Adrenal gland (tissue), 19 donors: ENCODE measurements at regions of chr1 and their contacts with region 1.

Region 1: DNA sequence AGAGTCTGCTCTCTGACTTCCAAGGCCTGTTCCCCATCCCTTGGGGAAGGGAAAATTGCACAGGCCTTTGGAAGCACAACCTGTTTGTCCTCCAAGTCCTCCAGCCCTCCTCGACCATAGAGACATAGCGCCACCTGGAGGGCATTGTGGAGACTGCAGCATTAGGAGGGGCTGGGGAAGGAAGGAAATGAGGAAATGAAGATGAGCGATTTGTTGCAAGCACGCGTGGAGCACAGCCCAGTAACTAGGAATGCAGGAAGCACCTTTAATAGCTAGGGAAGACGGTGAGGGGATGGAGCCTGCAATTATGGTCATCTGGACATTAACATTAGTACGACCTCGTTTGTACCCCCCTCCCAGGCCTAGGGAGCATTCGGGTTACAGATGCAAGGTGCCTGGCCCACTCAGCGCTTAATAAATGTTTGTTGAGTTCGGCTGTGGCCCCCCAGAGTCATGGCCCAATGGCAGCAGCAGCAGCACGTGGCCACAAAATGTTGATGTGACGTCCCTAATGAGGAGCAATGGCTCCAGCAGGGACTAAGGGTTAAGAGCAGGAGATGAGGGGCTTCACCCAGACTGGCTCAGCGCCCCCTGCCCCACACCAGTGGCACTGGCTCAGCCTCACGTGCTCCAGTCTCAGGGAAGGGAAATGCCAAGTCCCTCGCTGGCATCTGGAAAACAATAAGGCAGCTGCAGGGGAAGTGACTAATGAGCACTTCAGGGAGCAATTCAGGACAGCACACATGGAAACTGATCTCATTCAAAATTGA is 8.0 kb upstream of the CAMK2N1 start:
- DNase-seq: peak; percentile 75 to 95 (median 84)
- H3K4me3 ChIP-seq: no peak overlapping the region
- H3K27ac ChIP-seq: peak overlapping the region in 1 of 5 donors; percentile 31
- H3K4me1 ChIP-seq: peaks cover 0 to 12% of the 10 kb centered on the region in 2 donors
- H3K27me3 ChIP-seq: no peaks in the 10 kb centered on the region
- CTCF ChIP-seq: peak; percentile 96 to 99 (median 99)
- POLR2A ChIP-seq: no peak

Region 2: GRCh38 chr1:19918057-19918456 is 576.0 kb before region 1 on chr1:
- intact Hi-C with region 1: loop called in 1 of 2 experiments (anchors 10 kb)
- DNase-seq: peak; percentile 75 to 93 (median 86)
- H3K4me3 ChIP-seq: no peak overlapping the region
- H3K27ac ChIP-seq: no peak overlapping the region
- H3K4me1 ChIP-seq: no peaks in the 10 kb centered on the region
- H3K27me3 ChIP-seq: no peaks in the 10 kb centered on the region
- CTCF ChIP-seq: peak; percentile 86 to 94 (median 88)
- POLR2A ChIP-seq: no peak

Region 3: DNA sequence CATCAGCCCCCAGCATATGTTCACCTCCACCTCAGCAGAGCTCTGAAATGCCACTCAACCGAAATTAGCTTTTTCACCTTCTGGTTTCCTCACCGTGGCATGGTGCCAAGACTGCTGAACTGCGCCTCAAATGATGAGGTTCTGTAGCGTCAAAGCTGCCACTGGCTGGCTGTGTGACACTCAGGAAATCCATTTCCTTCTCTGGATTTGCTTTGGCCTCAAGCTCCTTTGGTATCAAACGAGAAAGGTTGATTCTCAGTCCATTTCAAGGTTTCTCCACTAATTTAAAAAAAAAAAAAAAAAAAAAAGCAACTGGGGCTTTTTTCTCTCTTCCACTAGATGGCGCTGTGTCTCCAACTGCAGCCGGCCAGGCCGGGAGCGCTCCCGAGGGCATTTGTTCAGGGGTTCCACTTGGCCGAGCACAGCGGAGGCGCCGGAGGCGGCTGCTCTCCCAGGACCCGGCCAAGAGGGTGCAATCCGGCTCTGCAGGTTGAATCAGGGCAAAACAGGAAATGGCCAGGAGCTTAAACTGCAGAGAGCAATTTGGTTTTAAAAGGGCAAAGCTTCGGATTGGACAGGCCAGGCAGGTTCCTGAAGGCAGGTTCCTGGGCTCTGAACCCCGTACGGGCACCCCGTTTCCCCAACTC is 281.2 kb before region 1 on chr1:
- intact Hi-C with region 1: loop called (anchors 5 kb)
- DNase-seq: peak; percentile 59 to 81 (median 74)
- H3K4me3 ChIP-seq: no peak overlapping the region
- H3K27ac ChIP-seq: peak overlapping the region in 3 of 5 donors; percentile 83 to 93 (median 87)
- H3K4me1 ChIP-seq: peaks cover 17 to 28% of the 10 kb centered on the region in 2 donors
- H3K27me3 ChIP-seq: no peaks in the 10 kb centered on the region
- CTCF ChIP-seq: peak; percentile 57 to 87 (median 72)
- POLR2A ChIP-seq: no peak

Region 4: DNA sequence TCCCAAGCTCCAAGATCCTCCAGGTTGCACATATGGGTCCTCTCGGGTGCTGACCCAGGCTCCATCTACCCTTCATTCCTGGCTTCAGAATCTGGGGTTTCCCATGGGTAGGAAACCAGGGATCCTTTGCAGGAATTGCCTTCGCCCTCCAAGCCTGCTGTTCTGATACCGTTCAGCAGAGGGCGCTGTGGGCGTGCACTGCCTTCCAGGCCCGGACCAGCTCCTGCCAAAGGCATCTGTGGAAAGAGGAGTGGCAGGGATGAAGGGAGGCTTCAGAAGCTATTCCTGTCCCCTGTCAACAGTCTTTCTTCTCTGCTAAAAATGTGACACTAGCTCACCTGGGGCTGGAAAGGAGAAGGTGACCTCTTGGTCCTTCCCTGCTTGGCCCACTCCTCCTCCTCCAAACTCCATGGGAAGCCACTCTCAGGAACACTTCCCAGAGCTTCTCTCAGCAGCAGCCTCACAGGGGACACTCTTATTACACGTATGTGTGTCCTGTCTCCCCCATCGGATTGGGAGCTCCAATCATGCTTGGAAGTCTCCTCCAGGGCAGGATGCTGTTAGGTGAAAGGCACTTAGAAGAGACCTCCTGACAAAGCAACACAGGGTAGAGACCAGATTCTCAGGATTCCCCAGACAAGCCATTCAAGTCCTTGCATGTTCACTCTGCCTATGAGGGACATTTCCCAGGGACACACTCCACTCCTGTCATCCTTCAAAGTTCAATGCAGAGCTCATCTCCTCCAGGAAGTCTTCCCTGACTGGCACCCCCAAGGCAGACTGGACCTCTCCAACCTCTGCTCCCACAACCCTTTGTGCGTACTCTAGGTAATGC is 132.0 kb before region 1 on chr1:
- intact Hi-C with region 1: loop called (anchors 5 kb)
- DNase-seq: peak; percentile 54 to 91 (median 75)
- H3K4me3 ChIP-seq: no peak overlapping the region
- H3K27ac ChIP-seq: no peak overlapping the region
- H3K4me1 ChIP-seq: peaks cover 7 to 24% of the 10 kb centered on the region in 2 donors
- H3K27me3 ChIP-seq: peaks cover 22% of the 10 kb centered on the region
- CTCF ChIP-seq: peak; percentile 58 to 89 (median 75)
- POLR2A ChIP-seq: no peak

Region 5: DNA sequence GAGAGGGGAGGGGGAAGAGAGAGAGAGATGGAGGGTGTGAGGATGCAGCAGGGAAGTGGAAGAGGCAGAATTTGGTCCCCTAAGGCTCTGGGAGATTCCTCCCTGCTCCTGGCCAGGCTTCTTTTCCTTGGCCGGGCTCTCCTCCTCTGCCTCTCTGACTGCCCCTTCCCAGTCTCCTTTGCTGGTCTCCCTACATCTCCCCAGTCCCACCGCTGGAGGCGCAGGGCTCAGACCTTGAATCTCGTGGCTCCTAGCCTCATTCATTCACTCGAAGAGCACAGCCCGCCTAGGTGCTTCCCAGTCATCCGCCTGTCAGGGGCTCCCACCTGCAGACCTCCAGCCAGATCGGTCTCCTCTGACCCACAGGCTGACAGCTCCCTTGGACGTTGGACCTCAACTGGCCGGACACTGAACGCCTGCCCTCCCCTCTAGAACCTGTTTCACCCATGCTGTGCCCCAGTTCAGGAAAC is 126.9 kb before region 1 on chr1:
- intact Hi-C with region 1: loop called (anchors 5 kb)
- DNase-seq: peak in 6 of 7 donors; percentile 46 to 73 (median 58)
- H3K4me3 ChIP-seq: peak overlapping the region in 1 of 4 donors; percentile 49
- H3K27ac ChIP-seq: peak overlapping the region in 1 of 5 donors; percentile 34
- H3K4me1 ChIP-seq: peaks cover 0 to 13% of the 10 kb centered on the region in 2 donors
- H3K27me3 ChIP-seq: peaks cover 22% of the 10 kb centered on the region
- CTCF ChIP-seq: peak; percentile 24 to 56 (median 48)
- POLR2A ChIP-seq: no peak

Region 6: GRCh38 chr1:20411196-20411980 is 82.6 kb before region 1 on chr1:
- intact Hi-C with region 1: no loop called
- DNase-seq: peak; percentile 70 to 90 (median 81)
- H3K4me3 ChIP-seq: no peak overlapping the region
- H3K27ac ChIP-seq: peak overlapping the region in 1 of 5 donors; percentile 41
- H3K4me1 ChIP-seq: no peaks in the 10 kb centered on the region
- H3K27me3 ChIP-seq: no peaks in the 10 kb centered on the region
- CTCF ChIP-seq: no peak
- POLR2A ChIP-seq: no peak

Region 7: GRCh38 chr1:20430355-20431175 is 63.5 kb before region 1 on chr1:
- intact Hi-C with region 1: loop called (anchors 5 kb)
- DNase-seq: peak in 5 of 7 donors; percentile 26 to 55 (median 40)
- H3K4me3 ChIP-seq: no peak overlapping the region
- H3K27ac ChIP-seq: no peak overlapping the region
- H3K4me1 ChIP-seq: no peaks in the 10 kb centered on the region
- H3K27me3 ChIP-seq: no peaks in the 10 kb centered on the region
- CTCF ChIP-seq: peak; percentile 54 to 86 (median 72)
- POLR2A ChIP-seq: no peak

Region 8: DNA sequence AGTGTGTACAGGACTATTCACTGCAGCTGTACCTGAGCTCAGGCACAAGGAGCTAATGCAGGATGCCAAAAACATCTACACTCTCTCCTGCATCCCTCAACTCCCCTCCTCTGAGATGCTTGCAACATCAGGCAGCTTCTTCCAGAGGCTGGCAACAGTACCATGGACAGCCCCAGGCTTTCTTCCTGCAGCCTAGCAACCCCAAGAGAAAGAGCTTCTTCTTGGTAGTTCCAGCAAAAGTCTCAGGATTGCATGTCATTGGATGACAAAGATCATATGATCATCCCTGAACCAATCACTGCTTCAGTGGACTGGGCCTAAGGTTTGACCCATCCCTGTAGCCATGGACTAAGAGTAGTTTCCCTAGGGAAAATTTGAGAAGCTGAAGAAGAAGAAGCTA is 54.7 kb before region 1 on chr1:
- intact Hi-C with region 1: loop called (anchors 5 kb)
- DNase-seq: no peak
- H3K4me3 ChIP-seq: no peak overlapping the region
- H3K27ac ChIP-seq: no peak overlapping the region
- H3K4me1 ChIP-seq: no peaks in the 10 kb centered on the region
- H3K27me3 ChIP-seq: no peaks in the 10 kb centered on the region
- CTCF ChIP-seq: no peak
- POLR2A ChIP-seq: no peak

Region 9: DNA sequence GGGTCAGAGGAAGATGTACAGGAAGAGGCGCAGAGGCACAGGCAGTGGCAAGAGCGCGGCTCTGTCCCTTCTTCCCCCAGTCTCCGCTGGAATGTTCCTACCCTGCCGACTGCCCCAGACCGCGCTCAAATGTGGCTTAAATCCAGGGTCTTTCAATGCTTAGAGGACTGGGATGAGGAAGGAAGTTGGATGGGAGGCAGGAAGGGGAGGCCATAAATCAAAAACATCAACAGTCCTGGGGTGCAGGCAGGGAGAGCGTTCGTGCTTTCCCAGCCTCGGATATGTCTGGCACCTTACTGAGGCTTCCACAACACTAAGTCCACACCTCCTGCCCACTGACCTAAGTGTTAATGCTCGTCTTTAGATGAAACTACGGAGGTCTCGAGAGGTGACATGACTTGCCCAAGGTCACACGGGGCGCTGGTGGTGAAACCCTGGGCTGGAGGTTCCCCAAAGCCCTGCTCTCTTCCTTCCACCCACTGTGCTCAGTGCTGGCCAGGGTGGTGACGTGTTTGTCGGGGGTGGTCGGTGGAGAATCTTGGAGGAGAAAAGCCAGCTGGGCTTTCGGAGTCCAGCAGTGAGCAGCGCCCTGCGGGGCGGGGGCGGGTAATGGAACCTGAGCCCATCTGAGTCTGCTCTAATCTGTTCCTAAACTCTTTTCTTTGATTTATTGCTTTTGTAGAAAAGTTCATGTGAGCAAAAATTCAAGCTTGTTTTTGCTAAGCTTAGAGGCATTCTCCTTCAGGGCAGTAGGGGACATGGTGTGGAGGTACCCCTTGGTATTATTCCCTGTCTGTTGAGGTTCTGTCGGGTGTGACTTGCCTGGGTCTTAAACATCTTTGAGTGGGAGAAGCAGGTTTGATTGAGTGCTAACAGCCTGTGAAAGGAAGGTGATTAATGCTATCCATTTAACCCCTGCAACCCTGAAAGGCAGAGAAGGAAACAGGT is 95.6 kb after region 1 on chr1:
- intact Hi-C with region 1: no loop called
- DNase-seq: peak; percentile 33 to 73 (median 57)
- H3K4me3 ChIP-seq: peak overlapping the region in 1 of 4 donors; percentile 30
- H3K27ac ChIP-seq: peak overlapping the region in 3 of 5 donors; percentile 19 to 79 (median 42)
- H3K4me1 ChIP-seq: peaks cover 4 to 13% of the 10 kb centered on the region in 2 donors
- H3K27me3 ChIP-seq: no peaks in the 10 kb centered on the region
- CTCF ChIP-seq: no peak
- POLR2A ChIP-seq: peak in 1 of 2 donors; percentile 13